Activated CD8-positive, alpha-beta T cell treated with anti-CD3 and anti-CD28 coated beads for 36 hours (primary cell): ENCODE measurements at regions of chr4 and their contacts with region 1.

Region 1: DNA sequence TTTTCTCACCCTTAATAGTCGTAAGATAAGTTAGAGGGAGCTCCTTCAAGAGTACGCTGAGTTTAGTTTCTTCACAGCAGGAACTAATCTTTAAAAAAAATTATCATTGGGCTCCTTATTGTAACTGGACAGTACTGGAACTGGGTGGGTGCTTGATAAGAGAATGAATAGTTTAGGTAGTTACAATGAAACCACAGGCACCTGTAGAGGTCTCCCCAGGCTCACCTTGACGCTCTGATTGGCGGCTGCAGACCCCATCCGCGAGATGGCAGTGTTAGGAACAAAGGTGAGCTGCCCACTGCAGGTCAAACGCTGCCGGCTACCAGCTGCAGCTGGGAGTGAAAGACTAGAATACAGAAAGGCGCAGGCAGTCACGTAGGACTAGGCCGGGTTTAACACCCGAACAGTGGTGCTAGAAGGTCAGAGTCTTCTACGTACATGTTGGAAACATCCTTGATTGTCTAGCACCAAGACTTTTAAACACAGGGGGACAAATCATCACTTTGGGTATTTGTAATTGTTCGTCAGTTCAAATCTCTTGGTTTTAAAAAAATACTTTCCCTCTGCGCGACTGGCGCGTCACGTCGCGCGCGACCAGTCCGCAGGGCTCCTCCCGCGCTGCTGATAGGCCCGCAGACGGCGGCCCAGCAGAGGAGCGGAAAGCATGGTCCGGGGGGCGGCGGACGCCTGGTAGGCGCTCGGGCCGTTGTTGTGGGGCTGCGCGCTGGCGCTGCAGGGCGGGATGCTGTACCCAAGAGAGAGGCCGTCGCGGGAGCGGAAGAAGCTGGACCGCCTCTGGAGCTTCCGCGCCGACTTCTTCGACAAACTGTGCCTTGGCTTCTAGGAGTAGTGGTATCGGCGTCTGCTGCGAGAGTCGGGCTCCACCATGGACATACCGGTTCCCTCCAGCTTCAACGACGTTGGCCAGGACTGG is 45.6 kb downstream of the SMARCA5 start:
- DNase-seq: peak; percentile 73
- ATAC-seq: peak; percentile 84
- H3K4me3 Mint-ChIP-seq: peak overlapping the region; percentile 77
- H3K27ac Mint-ChIP-seq: peak overlapping the region; percentile 81
- H3K4me1 Mint-ChIP-seq: peaks cover 27% of the 10 kb centered on the region
- H3K27me3 Mint-ChIP-seq: no peaks in the 10 kb centered on the region
- CTCF ChIP-seq: peak; percentile 52

Region 2: DNA sequence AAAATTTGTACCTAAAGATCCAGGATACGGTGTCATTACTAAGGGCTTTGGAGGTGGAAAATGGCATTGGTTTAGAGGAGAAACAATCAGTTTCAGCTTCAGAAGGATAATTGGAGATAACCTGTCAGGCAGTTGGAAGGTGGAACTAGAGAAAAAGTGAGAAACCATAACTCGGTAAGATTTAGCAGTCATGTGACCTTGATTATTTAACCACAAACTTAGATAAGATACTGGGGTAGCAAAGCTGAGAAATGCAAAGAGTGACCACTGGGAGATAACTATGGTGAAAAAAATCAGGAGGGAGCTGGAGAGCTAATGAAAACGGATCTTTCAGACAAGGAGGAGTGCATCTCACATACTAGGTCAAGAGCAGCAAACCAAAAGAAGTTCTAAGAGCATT is 103.9 kb before region 1 on chr4:
- CTCF ChIA-PET with region 1: no interaction called
- POLR2A ChIA-PET with region 1: no interaction called
- intact Hi-C with region 1: no loop called
- DNase-seq: no peak
- ATAC-seq: no peak
- H3K4me3 Mint-ChIP-seq: no peak overlapping the region
- H3K27ac Mint-ChIP-seq: no peak overlapping the region
- H3K4me1 Mint-ChIP-seq: no peaks in the 10 kb centered on the region
- H3K27me3 Mint-ChIP-seq: peaks cover 5% of the 10 kb centered on the region
- CTCF ChIP-seq: no peak

Region 3: DNA sequence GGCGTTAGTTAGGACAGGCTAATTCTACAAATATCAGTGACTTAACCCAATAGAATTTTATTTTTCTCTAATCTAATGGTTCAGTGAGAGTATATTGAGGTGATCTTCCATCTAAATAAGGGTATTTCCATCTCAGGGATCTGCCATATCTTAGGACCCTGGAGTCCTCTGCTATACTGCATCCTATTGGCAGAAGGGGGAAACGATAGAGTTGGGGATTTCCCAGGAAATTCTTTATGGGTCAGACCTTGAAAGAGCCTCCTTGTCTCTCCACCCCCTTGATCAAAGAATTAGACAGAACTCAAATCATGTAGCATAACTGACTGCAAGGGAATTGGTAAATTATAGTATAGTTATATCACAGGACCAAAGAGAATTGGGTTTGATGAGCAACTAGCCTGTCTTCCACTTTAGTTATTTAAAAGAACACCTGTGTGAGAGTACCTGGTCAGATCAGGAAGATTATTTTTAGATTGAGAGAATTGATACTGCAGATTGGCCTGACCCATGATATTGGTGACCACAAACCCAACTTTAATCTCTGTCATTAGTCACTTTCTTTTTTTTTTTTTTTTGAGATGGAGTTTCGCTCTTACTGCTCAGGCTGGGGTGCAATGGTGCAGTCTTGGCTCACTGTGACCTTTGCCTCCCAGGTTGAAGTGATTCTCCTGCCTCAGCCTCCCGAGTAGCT is 20.0 kb before region 1 on chr4:
- CTCF ChIA-PET with region 1: interaction called, 22 read pairs
- POLR2A ChIA-PET with region 1: no interaction called
- intact Hi-C with region 1: no loop called
- DNase-seq: peak; percentile 35
- ATAC-seq: peak; percentile 55
- H3K4me3 Mint-ChIP-seq: no peak overlapping the region
- H3K27ac Mint-ChIP-seq: peak overlapping the region; percentile 74
- H3K4me1 Mint-ChIP-seq: peaks cover 15% of the 10 kb centered on the region
- H3K27me3 Mint-ChIP-seq: no peaks in the 10 kb centered on the region
- CTCF ChIP-seq: no peak

Region 4: GRCh38 chr4:143575331-143575730 is 16.2 kb after region 1 on chr4:
- CTCF ChIA-PET with region 1: interaction called, 15 read pairs
- POLR2A ChIA-PET with region 1: no interaction called
- intact Hi-C with region 1: no loop called
- DNase-seq: no peak
- ATAC-seq: no peak
- H3K4me3 Mint-ChIP-seq: no peak overlapping the region
- H3K27ac Mint-ChIP-seq: no peak overlapping the region
- H3K4me1 Mint-ChIP-seq: no peaks in the 10 kb centered on the region
- H3K27me3 Mint-ChIP-seq: no peaks in the 10 kb centered on the region
- CTCF ChIP-seq: no peak

Region 5: DNA sequence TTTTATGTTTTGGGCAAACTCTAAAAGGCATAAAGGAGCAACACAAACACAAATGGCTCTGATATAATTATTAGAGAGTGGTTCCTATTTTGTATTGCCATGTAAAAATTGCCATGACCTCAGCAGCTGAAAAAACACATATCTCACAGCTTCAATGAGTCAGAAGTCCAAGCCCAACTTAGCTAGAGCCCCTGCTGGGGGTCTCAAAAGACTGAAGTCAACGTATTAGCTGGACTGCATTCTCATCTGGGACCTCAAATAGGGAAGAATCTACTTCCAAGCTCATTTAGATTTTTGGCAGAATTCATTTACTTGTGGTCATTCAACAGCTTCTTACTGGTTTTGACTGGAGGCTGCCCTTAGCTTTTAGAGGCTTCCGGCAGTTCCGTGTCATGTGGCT is 93.9 kb after region 1 on chr4:
- CTCF ChIA-PET with region 1: no interaction called
- POLR2A ChIA-PET with region 1: no interaction called
- intact Hi-C with region 1: no loop called
- DNase-seq: no peak
- ATAC-seq: no peak
- H3K4me3 Mint-ChIP-seq: no peak overlapping the region
- H3K27ac Mint-ChIP-seq: no peak overlapping the region
- H3K4me1 Mint-ChIP-seq: no peaks in the 10 kb centered on the region
- H3K27me3 Mint-ChIP-seq: no peaks in the 10 kb centered on the region
- CTCF ChIP-seq: no peak